Heart right ventricle (tissue), 16 donors: ENCODE measurements at regions of chr12 and their contacts with region 1.

Region 1: DNA sequence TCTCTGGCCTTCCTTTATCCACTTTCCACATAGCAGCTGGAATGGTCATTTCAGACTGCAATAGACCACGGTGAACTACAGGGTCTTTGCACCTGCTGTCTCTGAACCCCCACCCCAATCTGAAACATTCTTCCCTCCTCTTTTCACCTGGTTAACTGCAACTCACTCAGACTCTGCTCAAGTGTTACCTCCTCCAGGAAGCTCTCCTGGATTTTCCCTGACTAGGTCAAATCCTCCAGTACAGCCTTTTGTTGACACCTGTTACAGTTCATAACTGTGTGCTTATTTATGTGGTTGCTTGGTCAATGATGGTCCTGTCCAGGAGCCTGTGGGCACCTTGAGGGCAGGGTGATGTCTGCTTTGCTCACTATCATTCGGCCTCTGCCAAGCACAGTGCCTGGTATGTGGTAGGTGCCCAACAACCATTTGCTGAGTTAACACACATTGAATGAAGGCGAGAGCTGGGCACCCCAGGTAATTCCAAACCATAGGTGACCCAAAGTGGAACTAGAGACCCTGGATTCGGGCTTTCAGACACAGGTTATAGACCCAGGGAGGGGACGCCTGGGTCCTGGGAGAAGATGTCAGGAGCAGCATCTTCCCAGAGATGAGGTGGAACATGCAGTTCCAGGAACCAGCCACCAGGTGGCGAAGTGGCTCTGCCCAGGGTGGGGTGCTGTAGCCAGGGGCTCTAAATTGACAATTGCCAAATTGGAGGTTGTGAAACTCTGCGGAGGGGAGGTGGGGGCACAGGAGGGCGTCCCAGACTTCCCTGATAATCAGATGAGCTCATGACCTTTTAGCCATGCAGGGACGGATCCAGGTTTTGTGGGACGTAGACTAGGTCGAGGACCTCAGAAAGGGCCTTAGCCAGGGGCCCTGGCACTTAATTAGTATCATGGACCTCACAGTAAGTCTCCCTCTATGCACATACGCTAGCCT is 28.1 kb downstream of the TRPV4 start:
- DNase-seq: peak; percentile 53 to 75
- ATAC-seq: peak; percentile 58 to 86 (median 83)
- H3K4me3 ChIP-seq: no peak overlapping the region
- H3K27ac ChIP-seq: no peak overlapping the region
- H3K4me1 ChIP-seq: peaks cover 0 to 3% (median 0%) of the 10 kb centered on the region in 9 donors
- H3K27me3 ChIP-seq: peaks cover 0 to 2% (median 0%) of the 10 kb centered on the region in 7 donors
- CTCF ChIP-seq: peak; percentile 89 to 99 (median 97)

Region 2: DNA sequence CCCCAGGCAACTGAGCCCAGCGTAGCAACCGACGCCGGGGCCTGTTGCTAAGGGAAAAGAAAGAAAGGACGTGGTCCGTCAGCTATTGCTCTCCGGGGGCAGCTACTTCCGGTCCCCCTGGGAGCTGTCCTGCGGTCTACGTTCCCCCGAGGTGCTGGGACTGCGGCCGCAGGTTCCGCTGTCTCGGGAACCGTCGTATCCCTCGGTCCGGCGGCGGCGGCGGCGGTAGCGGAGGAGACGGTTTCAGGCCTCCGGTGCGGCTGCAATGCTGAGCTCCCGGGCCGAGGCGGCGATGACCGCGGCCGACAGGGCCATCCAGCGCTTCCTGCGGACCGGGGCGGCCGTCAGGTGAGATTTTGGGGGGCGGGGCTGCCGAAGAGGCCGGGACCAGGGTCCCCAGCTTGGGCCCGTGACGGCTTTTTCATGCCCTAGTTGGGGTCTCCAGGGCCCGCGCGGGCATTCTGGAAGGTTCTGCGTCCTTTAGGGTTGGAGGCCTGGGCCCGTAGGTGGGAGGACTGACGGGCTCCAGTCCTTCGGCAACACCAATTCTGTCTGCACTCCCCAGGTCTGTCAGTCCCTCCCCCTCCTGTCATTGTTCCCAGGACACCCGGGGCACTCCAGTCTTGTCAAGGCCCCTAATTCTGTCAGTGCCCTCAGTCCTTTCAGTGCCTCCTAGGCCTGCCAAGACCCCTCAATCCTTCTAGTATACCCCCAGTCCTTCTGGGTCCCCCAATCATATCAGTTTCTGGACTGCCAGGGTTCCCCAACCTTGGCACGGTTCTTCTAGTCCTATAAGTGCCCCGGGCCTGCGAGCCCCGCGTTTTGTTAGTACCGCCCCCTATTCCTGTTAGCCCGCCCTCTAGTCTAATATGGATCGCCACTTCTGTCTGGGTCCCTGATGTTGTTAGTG is 752.4 kb before region 1 on chr12 and contains the start of gene USP30:
- intact Hi-C with region 1: no loop called
- DNase-seq: peak; percentile 84 to 85
- ATAC-seq: peak; percentile 94 to 97 (median 96)
- H3K4me3 ChIP-seq: peak within 1 kb of the TSS; percentile 63 to 100 (median 92)
- H3K27ac ChIP-seq: peak within 1 kb of the TSS; percentile 66 to 96 (median 89)
- H3K4me1 ChIP-seq: peaks cover 2 to 24% (median 17%) of the 10 kb centered on the region in 9 donors
- H3K27me3 ChIP-seq: no peaks in the 10 kb centered on the region
- CTCF ChIP-seq: peak in 1 of 9 donors; percentile 10
- total RNA-seq, gene USP30: 8.8 to 22.2 (median 13.1) TPM

Region 3: GRCh38 chr12:109844983-109845823 is 40.1 kb after region 1 on chr12:
- intact Hi-C with region 1: loop called in 8 of 10 experiments (anchors 1 to 5 kb)
- DNase-seq: peak; percentile 83 to 90
- ATAC-seq: peak; percentile 87 to 98 (median 95)
- H3K4me3 ChIP-seq: peak overlapping the region in 6 of 10 donors; percentile 17 to 33 (median 27)
- H3K27ac ChIP-seq: peak overlapping the region in 1 of 10 donors; percentile 60
- H3K4me1 ChIP-seq: peaks cover 0 to 30% (median 0%) of the 10 kb centered on the region in 9 donors
- H3K27me3 ChIP-seq: no peaks in the 10 kb centered on the region
- CTCF ChIP-seq: peak; percentile 90 to 100 (median 98)

Region 4: DNA sequence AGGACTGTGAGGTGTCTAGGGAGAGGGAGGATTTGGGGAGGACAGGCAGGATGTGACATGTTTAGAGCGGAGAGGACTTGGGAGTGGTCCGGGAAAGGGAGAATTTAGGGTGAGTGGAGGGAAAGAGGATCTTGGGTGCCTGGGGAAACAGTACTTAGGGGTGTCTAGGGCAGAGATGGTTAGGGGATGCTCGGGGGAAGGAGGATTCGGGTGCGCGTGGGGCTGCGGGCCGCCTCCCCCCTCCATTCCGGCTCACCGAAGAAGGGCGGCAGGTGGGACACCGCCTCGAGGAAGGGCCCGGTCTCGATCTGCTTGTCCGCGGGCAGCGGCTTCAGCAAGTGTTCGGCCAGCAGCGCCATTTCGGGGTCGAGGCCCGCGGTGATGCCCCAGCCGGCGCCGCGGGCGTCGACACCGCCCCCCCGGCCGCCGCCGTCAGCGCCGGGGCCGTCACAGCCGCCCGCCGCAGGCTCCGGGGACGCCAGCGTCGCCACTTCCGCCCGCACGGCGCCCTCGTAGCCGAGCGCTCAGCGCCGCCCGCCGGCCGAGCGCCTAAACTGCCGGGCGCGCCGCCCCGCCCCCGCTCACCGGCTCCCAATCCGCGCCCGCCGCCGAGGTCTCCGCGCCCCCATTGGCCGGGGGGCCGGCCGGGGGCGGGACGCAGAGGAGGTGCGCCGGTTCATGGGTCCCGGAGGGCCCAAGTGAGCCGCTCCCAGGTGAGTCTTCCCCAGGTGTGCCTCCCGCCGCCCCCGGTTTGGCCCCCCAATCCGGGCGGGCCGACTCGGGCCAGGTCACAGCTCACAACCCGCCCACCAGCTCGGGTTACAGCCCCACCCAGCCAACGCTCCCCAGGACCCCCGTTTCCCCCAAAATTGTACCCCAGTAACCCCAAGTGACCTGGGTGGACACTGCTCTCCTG is 75.2 kb after region 1 on chr12 and contains the start of gene GLTP:
- intact Hi-C with region 1: loop called (anchors 1 to 5 kb)
- DNase-seq: peak; percentile 81 to 89
- ATAC-seq: peak; percentile 95 to 99 (median 96)
- H3K4me3 ChIP-seq: peak within 1 kb of the TSS; percentile 60 to 99 (median 88)
- H3K27ac ChIP-seq: peak within 1 kb of the TSS in 9 of 10 donors; percentile 46 to 95 (median 87)
- H3K4me1 ChIP-seq: peaks cover 11 to 32% (median 30%) of the 10 kb centered on the region in 9 donors
- H3K27me3 ChIP-seq: no peaks in the 10 kb centered on the region
- CTCF ChIP-seq: peak; percentile 26 to 87 (median 56)
- total RNA-seq, gene GLTP: 18.0 to 28.0 (median 22.0) TPM